Activated B cell treated with CpG ODN at 0.5 μM for 24 hours (primary cell): ENCODE measurements at regions of chr1 and their contacts with region 1.

Region 1: DNA sequence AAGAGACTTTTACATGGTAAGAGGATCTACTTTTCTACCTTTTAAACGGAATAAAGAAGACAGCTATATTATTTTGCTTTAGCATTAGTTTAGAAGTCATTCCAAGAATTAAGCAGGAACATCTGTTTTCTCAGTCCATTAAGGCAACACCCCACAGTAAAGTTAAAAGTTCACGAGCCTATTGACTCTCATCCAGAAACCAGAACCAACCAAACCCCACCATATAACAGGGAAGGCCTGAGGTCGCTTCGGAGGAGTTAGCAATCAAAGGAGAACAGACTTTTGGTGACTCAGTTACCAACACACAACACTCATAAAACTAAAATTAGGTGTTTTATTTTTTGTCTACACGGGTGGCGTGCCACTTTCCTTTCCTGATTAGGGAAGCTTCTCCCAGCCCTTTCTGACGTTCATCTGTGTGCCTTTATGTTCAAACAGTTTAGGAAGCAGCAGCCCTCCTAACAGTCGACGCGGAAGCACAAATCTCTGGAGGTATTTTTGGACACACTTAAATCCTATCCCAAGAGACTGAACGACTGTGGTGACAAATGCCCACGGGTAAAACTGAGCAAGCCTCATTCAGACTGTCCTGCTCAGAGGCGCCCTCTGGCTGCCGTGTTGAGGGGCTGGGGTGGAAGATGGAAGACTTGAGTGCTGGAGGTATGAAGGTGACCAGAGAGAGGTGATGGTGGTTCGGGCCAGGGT is 8.6 kb upstream of the PLA2G2C start:
- DNase-seq: peak; percentile 54
- ATAC-seq: peak; percentile 87
- H3K4me3 Mint-ChIP-seq: no peak overlapping the region
- H3K27ac Mint-ChIP-seq: no peak overlapping the region
- H3K4me1 Mint-ChIP-seq: peaks cover 7% of the 10 kb centered on the region
- H3K27me3 Mint-ChIP-seq: peaks cover 34% of the 10 kb centered on the region
- CTCF ChIP-seq: peak; percentile 56

Region 2: DNA sequence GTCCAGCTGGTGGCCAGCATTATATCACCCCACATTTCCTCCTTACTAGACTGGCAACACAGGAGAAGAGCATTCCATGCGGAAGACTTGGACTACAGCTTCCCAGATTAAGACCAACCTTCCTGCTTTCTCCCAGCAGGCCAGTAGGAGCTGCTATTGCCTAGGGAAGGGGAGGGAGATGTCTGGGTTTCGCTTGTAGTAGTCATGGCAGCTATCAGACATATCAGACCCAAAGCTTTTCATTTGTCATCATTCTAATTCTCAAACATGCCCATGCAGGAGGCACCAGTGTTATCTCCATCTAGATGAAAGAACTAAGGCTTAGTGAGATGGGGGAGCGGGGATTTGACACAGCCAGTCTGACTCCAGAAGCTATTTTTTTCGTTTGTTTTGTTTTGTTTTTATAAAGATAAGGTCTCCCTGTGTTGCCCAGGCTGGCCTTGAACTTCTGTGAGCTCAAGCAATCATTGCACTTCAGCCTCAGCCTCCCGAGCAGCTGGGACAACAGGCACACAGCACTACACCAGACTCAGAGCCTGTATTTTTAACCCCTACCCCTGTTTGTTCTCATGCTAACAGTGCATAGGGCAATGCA is 220.0 kb before region 1 on chr1:
- CTCF ChIA-PET with region 1: interaction called, 16 read pairs
- POLR2A ChIA-PET with region 1: no interaction called
- intact Hi-C with region 1: loop called (anchors 1 kb)
- DNase-seq: no peak
- ATAC-seq: peak; percentile 50
- H3K4me3 Mint-ChIP-seq: no peak overlapping the region
- H3K27ac Mint-ChIP-seq: no peak overlapping the region
- H3K4me1 Mint-ChIP-seq: peaks cover 3% of the 10 kb centered on the region
- H3K27me3 Mint-ChIP-seq: peaks cover 16% of the 10 kb centered on the region
- CTCF ChIP-seq: no peak

Region 3: GRCh38 chr1:20100632-20101355 is 94.1 kb before region 1 on chr1:
- CTCF ChIA-PET with region 1: interaction called, 16 read pairs
- POLR2A ChIA-PET with region 1: no interaction called
- intact Hi-C with region 1: loop called (anchors 1 kb)
- DNase-seq: peak; percentile 29
- ATAC-seq: peak; percentile 92
- H3K4me3 Mint-ChIP-seq: no peak overlapping the region
- H3K27ac Mint-ChIP-seq: no peak overlapping the region
- H3K4me1 Mint-ChIP-seq: peaks cover 6% of the 10 kb centered on the region
- H3K27me3 Mint-ChIP-seq: no peaks in the 10 kb centered on the region
- CTCF ChIP-seq: no peak

Region 4: DNA sequence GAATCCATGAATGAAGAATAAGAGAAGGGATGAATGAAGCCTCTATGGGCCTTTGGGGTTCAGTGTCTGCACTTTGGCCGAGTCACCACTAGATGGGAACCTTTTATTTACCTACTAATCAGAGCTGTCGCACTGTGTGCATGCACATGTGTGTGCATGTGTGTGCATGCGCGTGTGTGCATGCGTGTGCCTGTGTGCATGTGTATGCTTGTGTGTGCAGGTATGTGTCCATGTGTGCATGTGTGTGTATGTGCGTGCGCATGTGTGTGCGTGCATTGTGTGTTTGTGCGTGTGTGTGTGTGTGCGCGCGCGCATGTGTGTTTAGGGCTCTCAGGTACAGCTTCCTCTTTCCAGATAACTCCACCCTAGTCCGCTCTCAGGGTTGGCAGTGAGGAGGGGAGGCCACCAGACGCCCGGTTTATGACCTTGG is 29.4 kb before region 1 on chr1:
- CTCF ChIA-PET with region 1: interaction called, 12 read pairs
- POLR2A ChIA-PET with region 1: no interaction called
- intact Hi-C with region 1: no loop called
- DNase-seq: no peak
- ATAC-seq: no peak
- H3K4me3 Mint-ChIP-seq: no peak overlapping the region
- H3K27ac Mint-ChIP-seq: no peak overlapping the region
- H3K4me1 Mint-ChIP-seq: no peaks in the 10 kb centered on the region
- H3K27me3 Mint-ChIP-seq: peaks cover 10% of the 10 kb centered on the region
- CTCF ChIP-seq: no peak

Region 5: DNA sequence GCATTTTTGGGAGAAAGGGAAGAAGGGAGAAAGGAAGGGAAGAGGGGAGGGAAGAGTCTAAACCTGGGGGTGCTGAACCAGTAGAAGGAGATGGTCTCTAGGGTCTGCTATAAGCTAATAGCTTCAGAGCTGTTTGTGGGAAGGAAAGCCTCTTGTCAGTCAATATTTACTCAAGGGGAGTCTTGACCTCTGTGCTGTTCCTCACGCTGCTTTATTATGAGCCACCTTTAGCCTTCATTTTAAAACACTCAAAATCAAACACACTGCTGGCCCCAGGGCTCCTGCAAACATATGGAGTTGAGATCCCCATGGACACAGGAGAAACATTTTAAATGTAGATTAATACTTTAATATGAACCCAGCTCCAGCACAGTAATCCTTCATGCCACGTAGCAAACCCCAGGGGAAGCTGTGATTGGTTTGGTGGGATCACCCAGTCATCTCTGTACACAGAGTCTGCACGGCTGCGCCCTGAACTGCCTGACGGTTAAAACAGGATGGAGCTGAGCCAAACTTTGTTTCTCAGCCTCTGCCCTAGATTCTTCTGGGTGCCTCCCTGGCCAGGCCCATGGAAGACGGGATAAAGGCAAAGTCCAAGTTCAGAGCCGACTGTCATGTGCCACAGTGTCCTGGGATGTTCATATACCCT is 55.6 kb after region 1 on chr1:
- CTCF ChIA-PET with region 1: no interaction called
- POLR2A ChIA-PET with region 1: no interaction called
- intact Hi-C with region 1: no loop called
- DNase-seq: no peak
- ATAC-seq: no peak
- H3K4me3 Mint-ChIP-seq: no peak overlapping the region
- H3K27ac Mint-ChIP-seq: no peak overlapping the region
- H3K4me1 Mint-ChIP-seq: no peaks in the 10 kb centered on the region
- H3K27me3 Mint-ChIP-seq: peaks cover 15% of the 10 kb centered on the region
- CTCF ChIP-seq: no peak

Region 6: GRCh38 chr1:20640183-20640597 is 445.3 kb after region 1 on chr1:
- CTCF ChIA-PET with region 1: no interaction called
- POLR2A ChIA-PET with region 1: no interaction called
- intact Hi-C with region 1: no loop called
- DNase-seq: no peak
- ATAC-seq: peak; percentile 72
- H3K4me3 Mint-ChIP-seq: no peak overlapping the region
- H3K27ac Mint-ChIP-seq: no peak overlapping the region
- H3K4me1 Mint-ChIP-seq: peaks cover 3% of the 10 kb centered on the region
- H3K27me3 Mint-ChIP-seq: no peaks in the 10 kb centered on the region
- CTCF ChIP-seq: peak; percentile 42